ENCODE measurements at regions of chr15 and their contacts with region 1.

Region 1: GRCh38 chr15:39171944-39172368 is 408.9 kb upstream of the THBS1 start:
- DNase-seq: peak; percentile 85 to 88
- H3K4me3 ChIP-seq: no peak overlapping the region
- H3K27ac ChIP-seq: peak overlapping the region; percentile 34; the same call in 1 of the 2 replicates
- H3K4me1 ChIP-seq: peaks cover 12% of the 10 kb centered on the region
- H3K27me3 ChIP-seq: no peaks in the 10 kb centered on the region
- CTCF ChIP-seq: peak; percentile 66

Region 2: GRCh38 chr15:38707802-38708671 is 463.9 kb before region 1 on chr15:
- CTCF ChIA-PET with region 1: interaction called, 6 read pairs
- POLR2A ChIA-PET with region 1: no interaction called
- intact Hi-C with region 1: loop called (anchors 1 kb)
- DNase-seq: peak in 1 of 2 experiments; percentile 43
- H3K4me3 ChIP-seq: no peak overlapping the region
- H3K27ac ChIP-seq: no peak overlapping the region
- H3K4me1 ChIP-seq: peaks cover 3% of the 10 kb centered on the region
- H3K27me3 ChIP-seq: no peaks in the 10 kb centered on the region
- CTCF ChIP-seq: peak; percentile 77

Region 3: DNA sequence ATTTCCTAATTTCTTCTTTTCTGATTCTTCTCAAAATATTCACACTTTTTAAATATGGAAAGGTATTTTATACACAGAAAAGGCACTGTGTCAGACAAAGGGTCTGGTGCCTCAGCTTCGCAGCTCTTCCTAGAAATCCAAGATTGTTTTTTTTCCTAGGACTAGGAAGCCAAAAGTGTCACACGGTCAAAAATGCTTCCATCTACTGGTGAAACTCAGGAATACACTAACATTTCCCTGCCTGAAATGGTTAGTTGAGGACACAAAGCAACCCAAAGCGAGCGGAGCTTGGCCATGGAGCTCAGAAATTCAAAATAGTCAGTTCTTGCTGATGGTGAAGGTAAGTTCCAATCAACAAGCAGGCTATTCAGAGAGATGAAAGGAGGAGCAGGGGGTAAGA is 180.8 kb before region 1 on chr15:
- CTCF ChIA-PET with region 1: no interaction called
- POLR2A ChIA-PET with region 1: no interaction called
- intact Hi-C with region 1: loop called (anchors 5 kb)
- DNase-seq: no peak
- H3K4me3 ChIP-seq: no peak overlapping the region
- H3K27ac ChIP-seq: no peak overlapping the region
- H3K4me1 ChIP-seq: no peaks in the 10 kb centered on the region
- H3K27me3 ChIP-seq: no peaks in the 10 kb centered on the region
- CTCF ChIP-seq: peak; percentile 43

Region 4: DNA sequence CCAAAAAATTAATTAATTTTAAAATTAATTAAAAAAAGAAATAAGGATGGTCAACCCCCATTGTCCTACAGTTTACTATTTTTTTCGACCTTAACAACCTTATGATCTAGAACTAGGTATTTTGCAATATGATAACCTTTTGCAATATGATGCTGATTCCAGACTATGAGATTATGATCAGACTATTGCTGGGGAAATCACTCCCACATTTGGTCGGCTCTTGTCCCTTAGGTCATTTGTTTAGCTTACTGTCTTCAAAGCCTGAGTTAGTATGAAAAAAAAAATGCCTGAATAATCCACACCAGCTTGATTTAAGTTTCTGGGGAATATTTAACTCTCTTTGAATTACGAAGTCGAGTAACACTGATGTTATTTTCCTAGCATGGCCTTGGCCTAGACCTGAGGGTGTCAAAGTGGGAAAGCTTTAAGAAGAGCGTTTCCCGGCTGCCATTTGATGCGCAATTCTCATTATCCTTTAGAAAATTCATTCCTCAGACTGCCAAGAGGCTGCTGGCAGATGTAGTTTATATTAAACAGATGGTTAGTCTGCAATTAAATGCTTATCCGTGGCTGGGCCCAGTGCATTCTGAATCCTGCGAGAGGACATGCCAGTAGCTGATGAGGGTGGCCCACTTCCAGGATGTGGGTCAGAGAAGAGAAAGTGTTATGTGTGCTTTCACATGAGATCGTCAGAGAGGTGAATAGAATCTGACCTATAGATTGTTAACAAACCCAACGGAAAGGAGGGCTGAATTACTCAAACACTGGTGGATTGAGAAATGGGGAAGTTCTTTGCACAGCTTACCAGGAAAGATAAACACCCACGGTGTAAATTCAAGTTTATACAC is 87.0 kb before region 1 on chr15:
- CTCF ChIA-PET with region 1: no interaction called
- POLR2A ChIA-PET with region 1: no interaction called
- intact Hi-C with region 1: no loop called
- DNase-seq: no peak
- H3K4me3 ChIP-seq: no peak overlapping the region
- H3K27ac ChIP-seq: no peak overlapping the region
- H3K4me1 ChIP-seq: no peaks in the 10 kb centered on the region
- H3K27me3 ChIP-seq: no peaks in the 10 kb centered on the region
- CTCF ChIP-seq: no peak

Region 5: GRCh38 chr15:39213385-39213840 is 41.5 kb after region 1 on chr15:
- CTCF ChIA-PET with region 1: no interaction called
- POLR2A ChIA-PET with region 1: interaction called, 9 read pairs
- intact Hi-C with region 1: loop called (anchors 1 kb)
- DNase-seq: peak; percentile 85 to 97
- H3K4me3 ChIP-seq: 0 out of 2 replicates have a peak overlapping the region, but pooled peaks have one; percentile 26
- H3K27ac ChIP-seq: peak overlapping the region; percentile 77
- H3K4me1 ChIP-seq: peaks cover 16% of the 10 kb centered on the region
- H3K27me3 ChIP-seq: no peaks in the 10 kb centered on the region
- CTCF ChIP-seq: no peak

Region 6: DNA sequence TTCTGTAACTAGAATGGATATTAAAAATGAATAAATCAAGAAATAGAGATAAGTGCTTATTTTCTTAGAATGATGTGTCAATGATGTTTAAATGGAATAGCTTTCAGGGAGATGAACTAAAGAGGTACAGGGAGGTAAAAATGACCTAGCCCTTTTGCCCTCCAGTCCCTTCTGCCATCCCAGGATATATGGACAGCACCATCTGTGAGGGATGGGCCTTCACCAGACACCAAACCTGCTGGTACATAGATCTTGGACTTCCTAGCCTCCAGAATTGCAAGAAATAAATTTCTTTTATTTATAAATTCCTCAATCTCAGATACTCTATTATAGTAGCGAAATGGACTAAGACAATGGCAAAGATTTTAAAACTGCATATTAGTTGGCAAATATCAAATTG is 56.9 kb after region 1 on chr15:
- CTCF ChIA-PET with region 1: no interaction called
- POLR2A ChIA-PET with region 1: no interaction called
- intact Hi-C with region 1: no loop called
- DNase-seq: no peak
- H3K4me3 ChIP-seq: no peak overlapping the region
- H3K27ac ChIP-seq: no peak overlapping the region
- H3K4me1 ChIP-seq: peaks cover 11% of the 10 kb centered on the region
- H3K27me3 ChIP-seq: no peaks in the 10 kb centered on the region
- CTCF ChIP-seq: no peak

Region 7: DNA sequence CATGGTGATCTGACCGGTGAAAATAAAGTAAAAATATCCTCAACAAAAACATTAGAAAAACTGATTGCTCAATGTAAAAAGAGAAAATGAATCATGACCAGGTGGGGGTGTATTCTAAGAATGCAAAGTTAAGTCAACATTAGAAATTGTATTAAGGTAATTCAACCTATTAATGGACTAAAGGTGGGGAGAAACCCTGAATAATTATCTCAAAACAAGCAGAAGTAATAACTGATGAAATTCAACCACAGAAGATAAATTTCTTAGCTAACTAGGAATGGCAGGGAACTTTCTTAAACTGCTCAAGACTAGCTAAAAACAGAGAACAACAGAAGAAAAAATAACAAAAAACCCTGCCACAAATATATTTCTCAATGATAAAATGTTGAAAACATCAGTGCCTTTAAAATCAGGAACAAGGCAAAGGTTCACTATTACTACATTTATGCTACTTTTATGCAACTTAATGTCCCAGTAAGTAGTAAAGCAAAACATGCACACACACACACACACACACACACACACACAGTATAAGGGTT is 204.5 kb after region 1 on chr15:
- CTCF ChIA-PET with region 1: no interaction called
- POLR2A ChIA-PET with region 1: no interaction called
- intact Hi-C with region 1: no loop called
- DNase-seq: peak in 1 of 2 experiments; percentile 55
- H3K4me3 ChIP-seq: no peak overlapping the region
- H3K27ac ChIP-seq: no peak overlapping the region
- H3K4me1 ChIP-seq: no peaks in the 10 kb centered on the region
- H3K27me3 ChIP-seq: no peaks in the 10 kb centered on the region
- CTCF ChIP-seq: no peak

Region 8: DNA sequence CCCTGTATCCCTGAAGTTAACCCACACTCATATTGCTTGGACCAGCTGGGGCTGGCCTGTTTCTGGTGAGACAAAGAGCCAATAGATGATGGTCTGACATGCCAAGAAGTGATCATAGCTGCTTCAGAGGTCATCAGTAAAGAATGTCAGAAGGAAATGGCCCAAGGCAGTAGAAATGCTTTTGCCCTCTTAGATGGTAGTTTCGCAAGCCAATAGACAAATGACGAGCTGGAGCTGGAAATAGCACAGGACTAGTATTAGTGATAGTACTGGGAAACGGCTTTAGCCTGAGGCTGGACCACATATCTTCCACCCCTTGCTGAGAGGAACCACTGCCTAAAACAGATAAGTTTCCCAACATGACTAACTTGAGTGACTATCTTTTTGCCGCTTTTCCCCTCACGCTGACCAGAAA is 232.8 kb after region 1 on chr15:
- CTCF ChIA-PET with region 1: no interaction called
- POLR2A ChIA-PET with region 1: no interaction called
- intact Hi-C with region 1: loop called (anchors 2 kb)
- DNase-seq: peak; percentile 70 to 95
- H3K4me3 ChIP-seq: no peak overlapping the region
- H3K27ac ChIP-seq: no peak overlapping the region
- H3K4me1 ChIP-seq: peaks cover 32% of the 10 kb centered on the region
- H3K27me3 ChIP-seq: no peaks in the 10 kb centered on the region
- CTCF ChIP-seq: no peak

Region 9: GRCh38 chr15:39756806-39757522 is 585.0 kb after region 1 on chr15:
- CTCF ChIA-PET with region 1: interaction called, 3 read pairs
- POLR2A ChIA-PET with region 1: no interaction called
- intact Hi-C with region 1: loop called (anchors 10 kb)
- DNase-seq: peak; percentile 7 to 35
- H3K4me3 ChIP-seq: no peak overlapping the region
- H3K27ac ChIP-seq: no peak overlapping the region
- H3K4me1 ChIP-seq: no peaks in the 10 kb centered on the region
- H3K27me3 ChIP-seq: no peaks in the 10 kb centered on the region
- CTCF ChIP-seq: peak; percentile 76